ENCODE measurements at regions of chr1 and their contacts with region 1.

Region 1: DNA sequence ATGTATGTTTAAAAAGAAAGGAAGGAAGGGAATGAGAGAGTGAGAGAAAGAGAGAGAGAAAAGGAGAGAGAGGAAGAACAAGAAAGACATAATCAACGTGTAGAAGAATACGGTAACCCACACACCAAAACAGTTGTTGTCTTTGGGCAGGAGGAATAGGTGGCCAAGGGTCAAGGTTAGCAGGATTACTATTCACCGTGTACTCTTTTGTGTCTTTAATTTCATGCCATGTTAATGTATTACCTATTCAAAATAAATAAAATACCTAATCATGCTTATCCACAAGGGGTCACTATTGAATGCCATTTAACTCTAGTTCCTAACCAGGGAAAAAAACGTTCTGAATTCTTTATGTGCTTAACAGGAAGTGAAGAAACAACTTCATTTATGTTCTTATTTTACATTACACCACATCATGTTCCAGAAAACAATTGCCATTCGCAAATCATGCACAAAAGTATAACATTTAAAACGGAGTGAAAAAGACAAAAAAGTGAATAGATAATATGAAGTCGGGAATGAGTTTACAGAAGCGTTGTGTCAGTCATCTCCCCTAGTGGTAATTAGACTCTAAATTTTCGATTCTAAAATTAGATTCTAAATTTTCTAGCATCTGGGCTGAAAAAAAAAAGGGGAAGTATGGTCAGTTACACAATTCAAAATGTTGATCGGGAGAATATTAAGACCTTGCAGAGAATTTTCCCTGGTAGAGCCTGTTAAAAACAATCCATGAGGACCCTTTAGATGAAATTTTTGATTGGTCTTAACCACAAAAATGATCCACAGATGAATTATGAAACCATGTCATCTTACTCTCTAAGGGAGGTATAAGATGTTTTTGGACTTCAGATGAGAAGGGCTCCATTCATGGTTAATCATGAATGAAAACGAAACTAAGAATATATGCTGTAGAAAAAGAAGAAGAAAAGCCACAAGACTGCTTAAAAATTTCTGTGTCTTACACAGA is 700 bp upstream of the KMO start:
- DNase-seq: peak in 1 of 2 donors; percentile 78
- ATAC-seq: peak; percentile 88 to 92 (median 88)
- H3K4me3 ChIP-seq: peak overlapping the region; percentile 75
- H3K4me3 Mint-ChIP-seq: peak overlapping the region; percentile 99
- H3K27ac ChIP-seq: peak overlapping the region; percentile 68
- H3K27ac Mint-ChIP-seq: peak overlapping the region; percentile 81 to 87
- H3K4me1 ChIP-seq: peaks cover 2% of the 10 kb centered on the region
- H3K4me1 Mint-ChIP-seq: peaks cover 11 to 14% of the 10 kb centered on the region in 2 donors
- H3K27me3 ChIP-seq: peaks cover 2% of the 10 kb centered on the region
- H3K27me3 Mint-ChIP-seq: peaks cover 7 to 18% of the 10 kb centered on the region in 2 donors
- CTCF ChIP-seq: peak; percentile 84

Region 2: DNA sequence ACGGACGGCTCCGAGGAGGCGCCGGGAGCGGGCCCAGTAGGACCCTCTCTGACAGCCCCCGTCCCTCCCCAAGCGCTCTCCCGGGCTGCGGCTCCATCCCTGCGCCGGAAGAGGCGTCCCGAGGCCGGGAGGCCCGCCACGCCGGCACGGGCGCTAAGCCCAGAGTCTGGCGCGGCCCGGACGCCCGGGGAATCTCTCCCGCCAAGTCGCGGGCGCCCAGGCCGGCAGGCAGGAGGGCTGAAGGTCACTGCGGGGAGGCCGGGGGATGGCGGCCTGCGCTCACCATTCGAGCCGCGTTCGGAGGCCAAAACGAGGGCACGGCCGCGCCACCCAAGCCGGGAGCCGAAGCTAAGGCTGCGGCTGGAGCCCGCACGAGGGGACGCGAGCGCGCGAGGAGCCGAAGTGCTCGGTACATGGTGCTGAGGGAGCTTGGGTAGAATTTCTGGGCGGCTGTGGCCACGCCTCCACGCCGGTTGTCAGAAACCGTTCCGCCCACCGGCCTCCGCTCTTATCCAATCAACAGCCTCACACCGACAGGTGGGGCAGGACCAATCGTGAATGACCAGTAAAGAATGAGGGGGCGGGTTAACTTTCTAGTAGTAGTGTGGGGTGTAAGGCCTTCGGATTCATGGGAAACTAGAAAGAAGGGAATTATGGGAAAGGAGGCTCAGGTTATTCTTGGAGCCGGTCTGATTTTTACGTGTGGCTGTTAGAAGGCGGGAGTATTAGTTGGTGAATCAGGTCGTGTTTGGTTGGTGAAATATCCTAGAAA is 12.0 kb before region 1 on chr1 and contains the start of gene FH:
- intact Hi-C with region 1: loop called (anchors 1 kb)
- DNase-seq: peak; percentile 90 to 98
- ATAC-seq: peak; percentile 97 to 100 (median 97)
- H3K4me3 ChIP-seq: peak within 1 kb of the TSS; percentile 46
- H3K4me3 Mint-ChIP-seq: peak within 1 kb of the TSS; percentile 89
- H3K27ac ChIP-seq: peak within 1 kb of the TSS; percentile 63
- H3K27ac Mint-ChIP-seq: peak within 1 kb of the TSS in 1 of 2 donors; percentile 49
- H3K4me1 ChIP-seq: no peaks in the 10 kb centered on the region
- H3K4me1 Mint-ChIP-seq: peaks cover 5 to 11% of the 10 kb centered on the region in 2 donors
- H3K27me3 ChIP-seq: peaks cover 2% of the 10 kb centered on the region
- H3K27me3 Mint-ChIP-seq: peaks cover 22 to 27% of the 10 kb centered on the region in 2 donors
- CTCF ChIP-seq: no peak
- total RNA-seq, gene FH: 16.6 to 18.3 (median 16.7) TPM

Region 3: DNA sequence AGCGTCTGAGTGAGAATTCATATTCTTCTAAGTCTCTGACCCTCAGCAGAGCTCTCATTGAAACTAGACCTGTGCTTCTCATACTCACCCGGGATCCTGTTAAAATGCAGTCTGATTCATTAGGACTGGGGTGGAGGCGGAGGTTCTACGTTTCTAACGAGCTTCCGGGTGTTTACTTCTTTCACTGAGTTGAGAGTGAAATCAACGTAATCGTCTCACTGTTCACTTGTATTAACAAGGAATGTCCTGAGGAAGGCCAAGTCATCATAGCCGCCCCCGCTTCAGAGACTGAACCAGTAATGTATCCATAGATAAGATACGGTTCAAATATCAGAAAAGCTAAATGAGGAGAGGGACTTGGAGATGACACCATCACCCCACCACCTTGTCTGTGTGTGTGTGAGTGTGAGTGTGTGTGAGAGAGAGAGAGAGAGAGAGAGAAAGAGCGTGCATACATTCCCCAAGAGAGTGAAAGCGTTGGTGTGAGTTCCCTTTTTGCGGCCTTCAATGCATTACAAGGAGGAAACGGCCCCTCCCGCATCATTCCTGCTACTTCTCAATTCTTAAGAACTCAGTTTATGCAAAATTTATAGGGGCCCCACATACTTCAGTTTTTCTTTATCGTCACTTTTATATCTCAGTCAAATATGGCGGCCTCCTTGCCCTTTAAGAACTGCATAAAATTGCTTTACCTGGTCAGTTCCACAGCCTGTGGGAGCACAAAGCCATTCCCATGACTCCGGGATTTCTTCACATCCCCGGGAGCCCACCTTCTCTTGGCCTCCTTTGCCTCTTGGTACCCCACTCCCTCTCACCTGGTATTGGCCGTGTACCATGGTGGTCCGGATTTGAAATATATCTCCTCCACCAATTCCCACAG is 20.5 kb after region 1 on chr1:
- intact Hi-C with region 1: no loop called
- DNase-seq: peak; percentile 21 to 59
- ATAC-seq: peak; percentile 81 to 84 (median 83)
- H3K4me3 ChIP-seq: peak overlapping the region; percentile 24
- H3K4me3 Mint-ChIP-seq: peak overlapping the region; percentile 91
- H3K27ac ChIP-seq: peak overlapping the region; percentile 78
- H3K27ac Mint-ChIP-seq: peak overlapping the region; percentile 86 to 88
- H3K4me1 ChIP-seq: peaks cover 8% of the 10 kb centered on the region
- H3K4me1 Mint-ChIP-seq: peaks cover 20% of the 10 kb centered on the region in 2 donors
- H3K27me3 ChIP-seq: no peaks in the 10 kb centered on the region
- H3K27me3 Mint-ChIP-seq: peaks cover 0 to under 1% of the 10 kb centered on the region in 2 donors
- CTCF ChIP-seq: no peak

Region 4: GRCh38 chr1:241627453-241628259 is 96.2 kb after region 1 on chr1:
- intact Hi-C with region 1: loop called (anchors 1 kb)
- DNase-seq: peak in 1 of 2 donors; percentile 81
- ATAC-seq: peak in 2 of 3 donors; percentile 71 to 91
- H3K4me3 ChIP-seq: no peak overlapping the region
- H3K4me3 Mint-ChIP-seq: peak overlapping the region; percentile 65
- H3K27ac ChIP-seq: peak overlapping the region; percentile 49
- H3K27ac Mint-ChIP-seq: peak overlapping the region; percentile 36 to 82
- H3K4me1 ChIP-seq: no peaks in the 10 kb centered on the region
- H3K4me1 Mint-ChIP-seq: peaks cover 8% of the 10 kb centered on the region in 2 donors
- H3K27me3 ChIP-seq: no peaks in the 10 kb centered on the region
- H3K27me3 Mint-ChIP-seq: no peaks in the 10 kb centered on the region
- CTCF ChIP-seq: peak; percentile 63

Region 5: GRCh38 chr1:241847796-241848685 is 316.6 kb after region 1 on chr1 and contains the start of gene EXO1:
- intact Hi-C with region 1: loop called (anchors 5 kb)
- DNase-seq: peak; percentile 86 to 94
- ATAC-seq: peak; percentile 97
- H3K4me3 ChIP-seq: peak within 1 kb of the TSS; percentile 97
- H3K4me3 Mint-ChIP-seq: peak within 1 kb of the TSS; percentile 99
- H3K27ac ChIP-seq: peak within 1 kb of the TSS; percentile 99
- H3K27ac Mint-ChIP-seq: peak within 1 kb of the TSS; percentile 98 to 99
- H3K4me1 ChIP-seq: peaks cover 7% of the 10 kb centered on the region
- H3K4me1 Mint-ChIP-seq: peaks cover 16% of the 10 kb centered on the region in 2 donors
- H3K27me3 ChIP-seq: no peaks in the 10 kb centered on the region
- H3K27me3 Mint-ChIP-seq: peaks cover 6 to 10% of the 10 kb centered on the region in 2 donors
- CTCF ChIP-seq: peak; percentile 9
- total RNA-seq, gene EXO1: 1.6 to 2.7 (median 1.7) TPM

Region 6: GRCh38 chr1:241998412-241998921 is 467.0 kb after region 1 on chr1:
- intact Hi-C with region 1: loop called (anchors 1 kb)
- DNase-seq: peak; percentile 39 to 61
- ATAC-seq: peak; percentile 60 to 85 (median 76)
- H3K4me3 ChIP-seq: no peak overlapping the region
- H3K4me3 Mint-ChIP-seq: peak overlapping the region; percentile 66
- H3K27ac ChIP-seq: no peak overlapping the region
- H3K27ac Mint-ChIP-seq: no peak overlapping the region
- H3K4me1 ChIP-seq: peaks cover 4% of the 10 kb centered on the region
- H3K4me1 Mint-ChIP-seq: peaks cover 6% of the 10 kb centered on the region in 2 donors
- H3K27me3 ChIP-seq: no peaks in the 10 kb centered on the region
- H3K27me3 Mint-ChIP-seq: no peaks in the 10 kb centered on the region
- CTCF ChIP-seq: peak; percentile 78

Region 7: GRCh38 chr1:242017584-242018233 is 486.2 kb after region 1 on chr1:
- intact Hi-C with region 1: loop called (anchors 5 kb)
- DNase-seq: peak in 1 of 2 donors; percentile 56
- ATAC-seq: peak; percentile 67 to 84 (median 76)
- H3K4me3 ChIP-seq: no peak overlapping the region
- H3K4me3 Mint-ChIP-seq: no peak overlapping the region
- H3K27ac ChIP-seq: no peak overlapping the region
- H3K27ac Mint-ChIP-seq: no peak overlapping the region
- H3K4me1 ChIP-seq: no peaks in the 10 kb centered on the region
- H3K4me1 Mint-ChIP-seq: no peaks in the 10 kb centered on the region
- H3K27me3 ChIP-seq: no peaks in the 10 kb centered on the region
- H3K27me3 Mint-ChIP-seq: peaks cover 0 to 9% of the 10 kb centered on the region in 2 donors
- CTCF ChIP-seq: peak; percentile 66

Region 8: DNA sequence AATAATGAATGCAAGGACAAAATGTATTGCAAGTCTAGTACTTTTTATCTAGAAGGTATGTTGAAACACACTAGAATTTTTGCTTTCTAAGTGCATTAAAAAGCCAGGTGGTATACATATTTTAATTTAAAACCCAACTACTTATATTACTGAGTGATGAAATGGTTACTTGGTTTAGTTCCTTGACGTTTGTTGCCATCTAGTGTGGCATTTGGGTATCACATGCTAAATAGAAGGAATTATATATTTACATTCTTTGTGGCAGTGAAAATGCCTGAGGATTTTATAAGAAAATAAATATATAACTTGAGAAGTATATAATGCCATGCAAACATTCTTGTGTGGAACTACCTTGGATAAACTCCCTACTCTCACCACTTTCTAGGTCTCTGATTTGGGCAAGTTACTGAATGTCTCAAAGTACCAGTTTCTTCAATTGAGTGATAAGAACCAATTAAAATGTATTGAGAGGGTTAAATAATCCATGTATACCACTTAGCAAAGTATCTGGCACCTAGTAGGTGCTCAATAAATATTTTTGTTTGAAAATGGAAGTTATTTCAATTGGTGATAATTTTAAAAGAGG is 1793.9 kb after region 1 on chr1:
- intact Hi-C with region 1: loop called (anchors 5 kb)
- DNase-seq: peak in 1 of 2 donors; percentile 75
- ATAC-seq: peak; percentile 50 to 74 (median 67)
- H3K4me3 ChIP-seq: no peak overlapping the region
- H3K4me3 Mint-ChIP-seq: no peak overlapping the region
- H3K27ac ChIP-seq: no peak overlapping the region
- H3K27ac Mint-ChIP-seq: no peak overlapping the region
- H3K4me1 ChIP-seq: no peaks in the 10 kb centered on the region
- H3K4me1 Mint-ChIP-seq: no peaks in the 10 kb centered on the region
- H3K27me3 ChIP-seq: no peaks in the 10 kb centered on the region
- H3K27me3 Mint-ChIP-seq: no peaks in the 10 kb centered on the region
- CTCF ChIP-seq: peak; percentile 89